BJ (cell line): ENCODE measurements at regions of chr22 and their contacts with region 1.

Region 1: GRCh38 chr22:36977947-36978660 is 41.1 kb downstream of the TST start:
- DNase-seq: peak; percentile 12
- H3K4me3 ChIP-seq: peak overlapping the region; percentile 38
- H3K27me3 ChIP-seq: peaks cover 6% of the 10 kb centered on the region
- CTCF ChIP-seq: peak; percentile 91

Region 2: DNA sequence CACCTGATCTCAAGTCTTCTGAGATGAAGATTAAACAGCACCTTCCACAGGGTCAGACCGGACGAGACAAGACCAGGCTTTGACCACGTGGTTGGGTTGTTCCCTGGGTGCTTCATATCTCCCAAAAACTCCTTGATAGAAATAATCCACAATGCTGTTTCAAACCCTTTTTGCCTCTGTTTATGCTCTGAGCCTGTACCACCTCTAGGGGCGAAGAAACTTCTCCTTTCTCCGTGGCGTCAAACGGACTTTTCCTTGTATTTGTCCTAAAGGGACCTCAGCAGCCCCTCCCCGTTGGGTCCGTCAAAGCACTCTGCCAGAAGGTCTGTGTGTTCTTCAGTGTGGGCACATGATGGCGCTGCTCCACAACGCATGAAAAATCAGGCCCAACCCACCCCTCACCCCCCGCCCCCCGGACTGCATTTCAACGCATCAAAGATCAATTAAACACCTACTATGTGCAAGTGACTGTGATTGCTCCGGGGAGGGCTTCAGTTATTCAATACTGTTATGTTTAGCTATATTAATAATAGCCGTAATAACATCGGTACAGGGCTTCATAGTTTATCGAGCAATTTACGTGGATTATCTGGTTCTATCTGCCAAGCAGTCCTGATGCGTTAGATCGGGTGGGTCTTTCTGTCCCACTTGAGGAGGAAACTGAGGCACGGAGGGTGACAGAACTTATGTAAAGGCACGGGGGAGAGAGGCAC is 431.9 kb before region 1 on chr22:
- CTCF ChIA-PET with region 1: interaction called, 10 read pairs
- POLR2A ChIA-PET with region 1: no interaction called
- DNase-seq: no peak
- H3K4me3 ChIP-seq: no peak overlapping the region
- H3K27me3 ChIP-seq: peaks cover 6% of the 10 kb centered on the region
- CTCF ChIP-seq: peak; percentile 71

Region 3: GRCh38 chr22:36781656-36782627 is 196.2 kb before region 1 on chr22:
- CTCF ChIA-PET with region 1: interaction called, 28 read pairs
- POLR2A ChIA-PET with region 1: no interaction called
- DNase-seq: no peak
- H3K4me3 ChIP-seq: no peak overlapping the region
- H3K27me3 ChIP-seq: peaks cover 18% of the 10 kb centered on the region
- CTCF ChIP-seq: peak; percentile 91

Region 4: GRCh38 chr22:36873680-36874537 is 104.2 kb before region 1 on chr22:
- CTCF ChIA-PET with region 1: interaction called, 10 read pairs
- POLR2A ChIA-PET with region 1: no interaction called
- DNase-seq: peak; percentile 2
- H3K4me3 ChIP-seq: no peak overlapping the region
- H3K27me3 ChIP-seq: peaks cover 13% of the 10 kb centered on the region
- CTCF ChIP-seq: peak; percentile 61

Region 5: GRCh38 chr22:36966851-36967540 is 11.1 kb before region 1 on chr22:
- CTCF ChIA-PET with region 1: interaction called, 11 read pairs
- POLR2A ChIA-PET with region 1: no interaction called
- DNase-seq: no peak
- H3K4me3 ChIP-seq: no peak overlapping the region
- H3K27me3 ChIP-seq: peaks cover 3% of the 10 kb centered on the region
- CTCF ChIP-seq: no peak

Region 6: GRCh38 chr22:36991206-36991605 is 13.1 kb after region 1 on chr22:
- CTCF ChIA-PET with region 1: interaction called, 11 read pairs
- POLR2A ChIA-PET with region 1: no interaction called
- DNase-seq: no peak
- H3K4me3 ChIP-seq: no peak overlapping the region
- H3K27me3 ChIP-seq: peaks cover 7% of the 10 kb centered on the region; the same call in 1 of the 2 replicates
- CTCF ChIP-seq: no peak